ENCODE measurements at regions of chr7 and their contacts with region 1.

Region 1: DNA sequence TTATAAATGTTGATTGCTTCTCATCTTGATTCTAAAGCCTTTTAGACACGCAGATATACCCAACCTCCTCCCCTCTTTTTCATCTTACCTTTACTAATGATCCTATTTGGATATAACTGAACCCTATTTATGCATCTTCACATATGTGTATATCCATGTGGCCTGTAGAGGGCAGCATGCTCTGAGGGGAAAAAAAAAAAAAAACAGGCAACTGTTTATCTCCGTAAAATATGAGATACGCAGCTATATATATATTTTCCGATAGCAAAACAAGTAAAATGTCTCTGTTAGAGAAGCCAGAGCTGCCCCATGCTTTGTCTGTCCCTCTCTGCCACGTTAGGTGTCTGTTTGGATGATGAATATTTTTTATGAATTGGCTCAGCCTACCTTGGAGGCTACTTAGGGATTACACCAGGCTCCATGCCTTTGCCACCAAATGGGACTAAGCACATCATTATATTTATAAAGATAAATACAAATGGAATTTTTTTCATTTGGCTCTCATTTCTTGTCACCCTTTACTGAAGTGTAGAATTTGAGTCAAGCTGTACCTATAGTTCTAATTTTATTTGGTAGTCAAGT is 174.8 kb upstream of the FZD1 start:
- DNase-seq: peak in 2 of 7 donors; percentile 4 to 10
- H3K4me3 ChIP-seq: peak overlapping the region in 1 of 4 donors; percentile 28
- H3K27ac ChIP-seq: no peak overlapping the region
- H3K4me1 ChIP-seq: peaks cover 0 to 7% of the 10 kb centered on the region in 2 donors
- H3K27me3 ChIP-seq: no peaks in the 10 kb centered on the region
- CTCF ChIP-seq: peak; percentile 40 to 84 (median 66)
- POLR2A ChIP-seq: no peak

Region 2: DNA sequence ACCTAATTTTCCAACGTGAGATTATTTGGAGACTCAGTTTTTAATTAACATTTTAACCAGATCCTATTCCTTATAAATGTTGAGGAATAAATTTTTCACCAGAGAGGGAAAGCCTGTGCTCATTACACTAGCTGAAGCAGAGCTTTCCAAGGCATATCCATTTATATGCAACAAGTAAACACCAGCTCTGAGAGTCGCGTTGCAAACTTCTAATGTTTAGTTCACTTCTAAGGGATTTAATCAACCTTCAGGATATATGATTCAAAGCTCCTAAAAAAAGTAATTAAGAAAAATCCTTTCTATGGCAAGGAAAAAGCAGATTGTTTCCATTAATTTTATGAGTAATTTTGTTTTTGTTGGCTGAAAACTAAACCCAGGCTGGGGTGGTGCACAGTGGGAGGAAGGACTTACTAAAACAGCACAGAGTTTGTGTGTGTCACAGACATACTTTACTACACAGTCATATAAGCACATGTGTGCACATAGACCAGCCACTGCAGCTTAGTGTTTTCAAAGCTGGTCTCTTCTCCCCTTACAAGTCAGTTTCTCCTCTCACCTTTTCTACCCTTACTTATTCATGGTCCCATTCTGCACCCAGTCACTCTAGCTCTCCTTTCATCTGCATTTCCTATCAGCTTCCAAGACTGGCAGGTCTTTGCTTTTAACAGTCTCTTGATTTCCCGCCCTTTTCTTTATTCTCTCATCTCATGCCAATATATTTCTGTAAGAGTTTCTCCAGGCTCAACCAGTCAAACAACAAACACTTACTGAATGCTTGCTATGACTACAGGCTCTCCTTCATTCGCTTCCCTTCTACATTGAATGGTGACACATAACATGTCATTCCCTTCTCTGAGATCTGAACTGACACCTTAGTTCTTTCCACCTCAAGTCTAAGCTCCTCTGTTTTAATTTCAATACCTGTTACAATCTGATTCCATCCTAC is 93.6 kb after region 1 on chr7:
- intact Hi-C with region 1: no loop called
- DNase-seq: no peak
- H3K4me3 ChIP-seq: no peak overlapping the region
- H3K27ac ChIP-seq: no peak overlapping the region
- H3K4me1 ChIP-seq: no peaks in the 10 kb centered on the region
- H3K27me3 ChIP-seq: no peaks in the 10 kb centered on the region
- CTCF ChIP-seq: no peak
- POLR2A ChIP-seq: no peak

Region 3: GRCh38 chr7:91264046-91264923 is 174.8 kb after region 1 on chr7 and contains the start of gene FZD1:
- intact Hi-C with region 1: loop called in 1 of 2 experiments (anchors 10 kb)
- DNase-seq: peak; percentile 96 to 98 (median 97)
- H3K4me3 ChIP-seq: peak within 1 kb of the TSS; percentile 52 to 99 (median 64)
- H3K27ac ChIP-seq: peak within 1 kb of the TSS; percentile 73 to 96 (median 89)
- H3K4me1 ChIP-seq: peaks cover 5 to 12% of the 10 kb centered on the region in 2 donors
- H3K27me3 ChIP-seq: no peaks in the 10 kb centered on the region
- CTCF ChIP-seq: peak in 2 of 6 experiments; percentile 9 to 14
- POLR2A ChIP-seq: peak; percentile 10 to 85
- total RNA-seq, gene FZD1: 5.6 to 24.6 (median 14.3) TPM

Region 4: DNA sequence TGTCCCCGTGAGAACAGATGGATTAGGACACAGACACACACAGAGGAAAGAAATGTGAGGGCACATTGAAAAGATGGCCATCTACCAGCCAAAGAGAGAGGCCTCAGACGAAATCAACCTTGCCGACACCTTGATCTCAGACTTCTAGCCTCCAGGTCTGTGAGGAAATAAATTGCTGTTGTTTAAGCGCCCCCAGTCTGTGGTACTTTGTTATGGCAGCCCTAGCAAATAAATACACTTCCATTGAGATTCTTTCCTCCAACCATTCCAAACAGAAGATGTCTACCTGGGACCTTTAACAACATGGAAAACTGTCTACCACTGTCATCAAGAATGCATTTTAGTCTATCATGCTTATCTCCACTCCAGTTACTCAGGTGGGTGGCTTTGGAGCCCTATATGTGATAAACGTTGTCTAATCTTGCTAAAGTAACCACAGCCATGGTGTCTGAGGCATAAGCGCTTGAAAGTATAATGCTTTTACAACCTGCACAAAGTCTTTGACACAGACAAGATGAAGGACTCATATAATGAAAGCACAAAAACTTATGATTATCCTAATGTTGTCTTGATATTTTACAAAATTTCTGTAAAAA is 546.8 kb after region 1 on chr7:
- intact Hi-C with region 1: loop called in 1 of 2 experiments (anchors 10 kb)
- DNase-seq: peak in 3 of 7 donors; percentile 15 to 29 (median 24)
- H3K4me3 ChIP-seq: no peak overlapping the region
- H3K27ac ChIP-seq: no peak overlapping the region
- H3K4me1 ChIP-seq: no peaks in the 10 kb centered on the region
- H3K27me3 ChIP-seq: no peaks in the 10 kb centered on the region
- CTCF ChIP-seq: peak; percentile 31 to 62 (median 50)
- POLR2A ChIP-seq: no peak

Region 5: GRCh38 chr7:91784463-91784862 is 695.0 kb after region 1 on chr7:
- intact Hi-C with region 1: loop called in 1 of 2 experiments (anchors 10 kb)
- DNase-seq: no peak
- H3K4me3 ChIP-seq: no peak overlapping the region
- H3K27ac ChIP-seq: no peak overlapping the region
- H3K4me1 ChIP-seq: no peaks in the 10 kb centered on the region
- H3K27me3 ChIP-seq: no peaks in the 10 kb centered on the region
- CTCF ChIP-seq: peak in 5 of 6 experiments; percentile 25 to 48 (median 39)
- POLR2A ChIP-seq: no peak